Activated naive CD4-positive, alpha-beta T cell treated with anti-CD3 and anti-CD28 coated beads for 36 hours (primary cell): ENCODE measurements at regions of chr17 and their contacts with region 1.

Region 1: GRCh38 chr17:21214015-21214776 is at the start of gene TMEM11:
- DNase-seq: peak; percentile 95
- H3K4me3 Mint-ChIP-seq: peak within 1 kb of the TSS; percentile 91
- H3K27ac Mint-ChIP-seq: peak within 1 kb of the TSS; percentile 91
- H3K4me1 Mint-ChIP-seq: peaks cover 65% of the 10 kb centered on the region
- H3K27me3 Mint-ChIP-seq: no peaks in the 10 kb centered on the region
- total RNA-seq, gene TMEM11: 23.6 to 28.2 TPM

Region 2: GRCh38 chr17:21119247-21119918 is 94.8 kb before region 1 on chr17:
- CTCF ChIA-PET with region 1: interaction called, 7 read pairs
- intact Hi-C with region 1: loop called (anchors 2 kb)
- DNase-seq: peak; percentile 83
- H3K4me3 Mint-ChIP-seq: peak overlapping the region; percentile 16
- H3K27ac Mint-ChIP-seq: no peak overlapping the region
- H3K4me1 Mint-ChIP-seq: peaks cover 6% of the 10 kb centered on the region
- H3K27me3 Mint-ChIP-seq: peaks cover 2% of the 10 kb centered on the region

Region 3: DNA sequence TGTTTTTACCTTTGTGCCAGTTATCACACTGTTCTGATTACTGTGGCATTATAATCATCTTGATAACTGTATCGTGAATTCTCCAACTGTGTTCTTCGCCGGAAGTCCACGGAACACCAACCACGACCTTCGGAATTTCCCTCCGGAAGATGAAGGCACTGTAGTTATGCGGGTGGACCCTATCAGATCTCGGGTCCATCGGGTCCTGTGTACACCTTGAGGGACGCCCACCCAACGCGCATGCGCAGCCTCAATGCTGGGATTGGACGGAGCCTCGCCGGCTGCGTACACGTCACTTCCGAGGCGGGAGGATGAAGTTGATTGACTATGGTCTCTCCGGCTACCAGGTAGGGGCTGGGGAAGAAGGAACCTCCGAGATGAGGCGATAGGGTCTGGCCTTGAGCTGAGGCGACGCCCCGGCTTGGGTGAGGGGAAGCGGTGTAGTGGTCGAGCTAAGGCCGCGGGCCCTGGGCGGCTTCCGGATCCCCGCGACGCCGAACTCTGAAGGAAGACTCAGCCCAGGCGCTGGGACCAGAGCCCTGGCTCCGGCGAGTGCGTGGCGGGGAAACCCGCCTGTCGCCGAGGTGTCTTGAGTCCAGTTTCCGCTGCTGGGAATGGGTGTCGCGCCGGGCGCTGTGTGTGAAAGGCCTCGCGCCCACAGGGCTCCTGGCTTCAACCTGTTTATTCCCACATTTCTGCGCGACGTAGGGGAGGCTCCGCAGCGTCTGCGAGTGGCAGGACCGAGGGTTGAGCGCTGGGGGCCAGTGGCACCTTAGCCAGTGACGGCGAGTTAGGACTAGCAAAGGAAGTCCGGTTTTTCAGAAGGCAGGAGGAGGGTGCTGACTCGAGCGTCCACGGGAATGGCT is 87.3 kb before region 1 on chr17 and contains the start of gene DHRS7B:
- CTCF ChIA-PET with region 1: interaction called, 8 read pairs
- intact Hi-C with region 1: loop called (anchors 1 kb)
- DNase-seq: peak; percentile 98
- H3K4me3 Mint-ChIP-seq: peak within 1 kb of the TSS; percentile 95
- H3K27ac Mint-ChIP-seq: peak within 1 kb of the TSS; percentile 94
- H3K4me1 Mint-ChIP-seq: peaks cover 35% of the 10 kb centered on the region
- H3K27me3 Mint-ChIP-seq: no peaks in the 10 kb centered on the region
- total RNA-seq, gene DHRS7B: 12.0 to 12.1 TPM

Region 4: GRCh38 chr17:21252796-21253645 is 38.8 kb after region 1 on chr17 and contains the start of gene NATD1:
- CTCF ChIA-PET with region 1: no interaction called
- intact Hi-C with region 1: loop called (anchors 1 kb)
- DNase-seq: peak; percentile 82
- H3K4me3 Mint-ChIP-seq: peak within 1 kb of the TSS; percentile 79
- H3K27ac Mint-ChIP-seq: no peak within 1 kb of the TSS
- H3K4me1 Mint-ChIP-seq: peaks cover 19% of the 10 kb centered on the region
- H3K27me3 Mint-ChIP-seq: no peaks in the 10 kb centered on the region
- total RNA-seq, gene NATD1: 2.1 to 2.5 TPM